CD14-positive monocyte (primary cell): ENCODE measurements at regions of chr1 and their contacts with region 1.

Region 1: DNA sequence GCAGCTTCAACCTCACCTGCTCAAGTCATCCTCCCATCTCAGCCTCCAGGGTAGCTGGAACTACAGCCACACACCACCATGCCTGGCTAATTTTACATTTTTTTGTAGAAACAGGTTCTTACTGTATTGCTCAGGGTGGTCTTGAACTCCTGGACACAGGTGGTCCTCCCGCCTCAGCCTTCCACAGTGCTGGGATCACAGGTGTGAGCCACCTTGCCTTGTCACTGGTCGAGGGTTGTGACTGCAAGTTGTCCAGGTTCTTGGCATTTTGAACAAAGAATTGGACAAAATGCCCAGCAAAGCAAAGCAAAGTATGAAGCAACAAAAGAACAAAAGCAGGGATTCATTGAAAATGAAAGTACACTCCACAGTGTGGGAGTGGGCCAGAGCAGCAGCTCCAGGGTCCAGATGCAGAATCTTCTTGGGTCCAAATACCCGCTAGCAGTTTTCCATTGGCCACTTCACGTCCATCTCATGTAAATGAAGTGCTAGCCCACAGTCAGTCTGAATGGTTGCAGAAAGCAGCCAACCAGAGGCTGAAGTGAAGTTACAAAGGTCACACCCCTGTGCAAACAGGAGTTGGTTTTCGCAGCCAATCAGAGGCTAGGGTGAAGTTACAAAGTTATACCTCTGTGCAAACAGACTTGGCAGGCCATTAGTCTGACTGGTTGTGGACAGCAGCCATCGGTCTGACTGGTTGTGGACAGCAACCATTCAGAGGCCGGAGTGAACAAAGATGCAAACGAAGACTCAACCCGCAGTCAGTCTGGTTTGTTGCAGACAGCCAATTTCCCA is 109.5 kb upstream of the KIF26B start:
- DNase-seq: no peak
- H3K4me3 ChIP-seq: no peak overlapping the region
- H3K4me3 Mint-ChIP-seq: no peak overlapping the region
- H3K27ac ChIP-seq: no peak overlapping the region
- H3K27ac Mint-ChIP-seq: peak overlapping the region in 1 of 7 donors; percentile 72
- H3K4me1 ChIP-seq: no peaks in the 10 kb centered on the region
- H3K4me1 Mint-ChIP-seq: peaks cover 18% of the 10 kb centered on the region
- H3K27me3 ChIP-seq: no peaks in the 10 kb centered on the region
- H3K27me3 Mint-ChIP-seq: peaks cover 0 to 1% (median 0%) of the 10 kb centered on the region in 3 donors
- CTCF ChIP-seq: no peak

Region 2: DNA sequence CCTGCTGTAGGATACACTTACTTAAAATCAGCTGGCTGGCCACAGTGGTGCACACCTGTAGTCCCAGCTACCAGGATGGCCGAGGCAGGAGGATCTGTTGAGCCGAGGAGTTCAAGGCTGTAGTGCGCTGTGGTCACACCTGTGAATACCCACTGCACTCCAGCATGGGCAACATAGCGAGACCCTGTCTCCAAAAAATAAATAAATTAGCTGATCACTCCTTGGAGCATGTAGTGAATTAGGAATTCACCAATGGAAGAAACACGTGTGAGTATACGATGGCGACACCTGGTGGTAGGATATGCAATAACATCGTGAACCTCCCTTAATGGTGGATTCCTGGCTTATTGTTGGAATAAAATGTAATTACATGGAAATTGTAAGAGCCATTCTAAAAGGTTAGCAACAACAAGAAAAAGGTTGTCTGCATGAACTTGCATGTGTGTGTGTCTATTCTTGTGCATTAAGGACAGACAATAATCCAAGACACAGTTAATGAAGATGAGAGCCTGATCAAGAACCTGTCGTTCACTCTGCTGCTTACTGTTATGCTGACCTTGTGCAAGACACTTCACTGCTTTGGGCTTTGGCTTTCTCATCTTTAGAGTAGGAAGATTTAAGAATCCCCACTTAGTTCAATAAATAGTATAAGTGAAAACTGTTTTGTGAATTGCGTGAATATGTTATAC is 248.4 kb before region 1 on chr1:
- intact Hi-C with region 1: loop called (anchors 2 to 5 kb)
- DNase-seq: peak; percentile 41 to 68 (median 64)
- H3K4me3 ChIP-seq: no peak overlapping the region
- H3K4me3 Mint-ChIP-seq: no peak overlapping the region
- H3K27ac ChIP-seq: no peak overlapping the region
- H3K27ac Mint-ChIP-seq: no peak overlapping the region
- H3K4me1 ChIP-seq: peaks cover 0 to 4% of the 10 kb centered on the region in 2 donors
- H3K4me1 Mint-ChIP-seq: peaks cover 2% of the 10 kb centered on the region
- H3K27me3 ChIP-seq: no peaks in the 10 kb centered on the region
- H3K27me3 Mint-ChIP-seq: peaks cover 5 to 7% (median 6%) of the 10 kb centered on the region in 3 donors
- CTCF ChIP-seq: peak; percentile 97